ENCODE measurements at regions of chr6 and their contacts with region 1.

Region 1: GRCh38 chr6:113858480-113859348 is 1.6 kb downstream of the MARCKS start:
- DNase-seq: peak; percentile 95

Region 2: GRCh38 chr6:112780498-112781096 is 1078.1 kb before region 1 on chr6:
- intact Hi-C with region 1: loop called (anchors 5 kb)
- DNase-seq: no peak

Region 3: GRCh38 chr6:113122060-113122459 is 736.7 kb before region 1 on chr6:
- intact Hi-C with region 1: loop called (anchors 5 kb)
- DNase-seq: no peak

Region 4: DNA sequence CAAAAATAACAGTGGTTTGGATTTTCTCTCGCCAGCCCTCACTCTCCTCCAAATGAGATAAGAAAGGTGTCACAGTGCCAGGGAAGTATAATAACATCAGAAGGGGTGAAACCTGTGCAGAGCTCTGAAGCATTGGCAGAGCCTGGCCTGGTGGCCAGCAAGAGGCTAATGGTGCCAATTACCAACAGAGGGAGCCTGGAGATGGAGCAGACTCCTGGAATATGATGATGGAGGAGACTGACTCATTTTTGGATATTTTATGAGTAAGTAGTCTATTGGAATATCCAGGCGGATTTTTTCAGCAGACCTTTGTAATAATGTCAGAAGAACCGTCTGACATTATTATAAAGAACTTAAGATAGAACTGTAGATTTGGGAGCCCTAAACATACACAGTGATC is 444.2 kb before region 1 on chr6:
- intact Hi-C with region 1: loop called (anchors 2 kb)
- DNase-seq: peak; percentile 75

Region 5: GRCh38 chr6:113903666-113904330 is 45.1 kb after region 1 on chr6:
- intact Hi-C with region 1: loop called (anchors 5 kb)
- DNase-seq: no peak

Measured in cardiac septum (tissue), 1 donor.